ENCODE measurements at regions of chr20 and their contacts with region 1.

Region 1: GRCh38 chr20:46572153-46572552 is 21.7 kb upstream of the OCSTAMP start:
- DNase-seq: peak; percentile 83 to 98 (median 95)

Region 2: DNA sequence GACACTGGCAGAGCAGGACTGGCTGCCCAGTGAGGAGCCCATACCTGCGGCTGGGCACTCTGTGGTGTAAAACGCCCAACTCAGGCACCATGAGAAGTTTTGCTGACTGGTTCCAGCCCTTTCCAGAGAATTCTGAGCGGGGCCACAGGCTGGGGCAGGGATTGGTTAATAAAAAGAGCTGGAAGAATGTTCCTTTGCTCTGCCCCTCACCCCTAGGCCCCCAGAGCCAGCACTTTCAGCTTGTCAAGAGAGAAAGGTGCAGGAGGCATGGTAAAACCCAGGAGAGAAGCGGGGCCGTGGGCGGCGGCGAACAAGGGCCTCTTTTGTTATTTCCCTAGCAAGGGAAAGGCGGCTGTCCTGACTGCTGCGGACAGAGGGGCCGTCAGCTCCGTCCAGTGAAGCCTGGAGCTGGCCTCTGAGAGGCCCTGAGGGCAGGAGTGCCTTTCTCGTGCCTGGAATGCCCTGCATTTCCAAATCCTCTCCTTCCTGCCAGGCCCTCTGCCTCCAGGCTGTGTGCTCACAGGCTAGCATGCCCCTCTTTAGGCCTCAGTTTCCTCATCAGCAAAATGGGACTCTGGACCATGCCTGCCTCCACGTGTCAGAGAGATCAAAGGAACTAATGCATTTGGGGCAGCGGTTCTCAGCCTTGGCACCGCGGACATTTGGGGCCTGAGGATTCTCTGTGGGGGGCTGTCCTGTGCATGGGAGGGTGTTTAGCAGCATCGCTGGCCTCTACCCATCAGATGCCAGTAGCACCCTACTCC is 66.2 kb after region 1 on chr20:
- intact Hi-C with region 1: loop called (anchors 5 kb)
- DNase-seq: peak in 41 of 42 donors; percentile 25 to 84 (median 57)